ENCODE measurements at regions of chr6 and their contacts with region 1.

Region 1: DNA sequence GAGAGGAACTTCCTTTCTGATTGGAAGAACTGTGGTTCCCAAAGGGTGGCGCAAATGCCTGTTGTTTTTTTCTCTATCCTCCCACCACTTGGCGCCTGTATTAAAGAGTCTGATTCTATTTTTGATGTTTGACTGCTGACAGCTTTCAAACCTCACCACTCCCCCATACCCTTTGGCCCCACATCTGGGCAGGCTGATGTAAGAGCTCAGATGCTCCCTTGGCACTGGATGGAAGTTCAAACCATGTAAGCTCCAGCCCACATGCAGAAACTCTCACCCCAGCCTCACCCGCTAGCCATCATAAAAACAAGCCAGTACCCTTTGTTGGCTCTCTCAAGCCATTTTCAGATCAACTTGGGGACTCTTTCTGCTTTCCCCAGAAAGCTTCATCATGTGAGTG is 20.0 kb upstream of the TMEM14A start:
- DNase-seq: no peak
- H3K4me3 ChIP-seq: no peak overlapping the region
- H3K27ac ChIP-seq: peak overlapping the region in 7 of 8 donors; percentile 22 to 69 (median 61)
- H3K4me1 ChIP-seq: peaks cover 0 to 25% (median 2%) of the 10 kb centered on the region in 6 donors
- H3K27me3 ChIP-seq: peaks cover 0 to 23% (median 0%) of the 10 kb centered on the region in 7 donors
- CTCF ChIP-seq: no peak
- POLR2A ChIP-seq: no peak

Region 2: GRCh38 chr6:52284460-52285176 is 366.3 kb before region 1 on chr6 and contains the start of gene MCM3:
- intact Hi-C with region 1: no loop called
- DNase-seq: peak; percentile 97
- H3K4me3 ChIP-seq: peak within 1 kb of the TSS; percentile 61 to 95 (median 86)
- H3K27ac ChIP-seq: peak within 1 kb of the TSS; percentile 54 to 87 (median 80)
- H3K4me1 ChIP-seq: peaks cover 17 to 59% (median 34%) of the 10 kb centered on the region in 6 donors
- H3K27me3 ChIP-seq: no peaks in the 10 kb centered on the region
- CTCF ChIP-seq: peak in 9 of 11 experiments; percentile 5 to 69 (median 32)
- POLR2A ChIP-seq: no peak
- total RNA-seq, gene MCM3: 32.3 to 48.6 (median 36.8) TPM

Region 3: DNA sequence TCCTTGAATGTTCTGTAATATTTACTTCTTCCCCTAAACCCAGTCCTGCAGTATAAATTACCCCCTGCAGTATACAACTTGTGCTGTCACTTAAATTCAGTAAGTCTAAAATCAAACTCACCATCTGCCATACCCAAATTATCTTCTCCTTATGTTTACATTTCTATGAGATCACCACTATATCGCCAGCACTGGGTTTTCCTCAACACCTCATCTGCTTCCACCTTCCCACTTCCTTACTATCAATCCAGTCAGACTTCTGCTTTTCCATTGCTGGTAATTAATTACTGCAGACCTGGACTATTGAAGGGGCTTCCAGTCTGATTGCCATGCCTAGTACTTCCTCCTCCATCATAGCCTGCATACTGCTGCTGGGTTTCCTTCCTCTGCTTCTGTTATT is 215.6 kb before region 1 on chr6:
- intact Hi-C with region 1: no loop called
- DNase-seq: no peak
- H3K4me3 ChIP-seq: no peak overlapping the region
- H3K27ac ChIP-seq: no peak overlapping the region
- H3K4me1 ChIP-seq: no peaks in the 10 kb centered on the region
- H3K27me3 ChIP-seq: no peaks in the 10 kb centered on the region
- CTCF ChIP-seq: no peak
- POLR2A ChIP-seq: no peak

Region 4: DNA sequence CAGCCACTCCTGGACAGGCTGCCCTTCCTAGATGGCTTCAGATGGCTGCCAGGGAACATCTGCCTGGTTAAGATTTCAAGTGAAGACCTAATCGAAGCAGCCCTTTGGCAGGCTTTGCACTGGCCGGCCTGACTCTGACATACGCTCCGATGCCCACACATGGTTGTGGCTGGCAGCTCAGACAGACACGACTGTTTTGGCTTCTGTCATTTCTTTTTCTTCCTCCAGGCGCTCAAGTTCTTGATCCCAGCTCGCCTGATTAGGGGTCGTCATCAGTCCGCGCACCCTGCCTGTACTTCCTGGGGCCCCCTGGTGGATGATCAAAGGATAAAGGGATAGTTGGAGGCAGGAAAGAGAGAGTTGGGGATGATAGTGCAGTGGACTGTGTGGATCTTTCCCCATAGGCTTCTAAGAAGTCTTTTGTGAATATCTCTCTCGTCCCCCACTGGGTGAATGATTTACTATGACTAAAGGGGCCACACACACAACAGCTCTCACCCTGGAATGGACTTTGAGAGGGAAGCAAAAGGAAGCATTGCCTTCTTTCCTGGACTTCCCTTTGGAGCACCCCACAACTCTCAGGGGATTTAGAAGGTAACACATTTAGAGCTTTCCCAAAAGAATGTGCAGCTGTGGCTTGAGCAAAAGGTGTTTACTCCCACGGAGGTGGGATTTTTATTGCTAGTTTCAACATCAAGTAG is 52.7 kb before region 1 on chr6:
- intact Hi-C with region 1: loop called (anchors 10 kb)
- DNase-seq: no peak
- H3K4me3 ChIP-seq: no peak overlapping the region
- H3K27ac ChIP-seq: peak overlapping the region in 6 of 8 donors; percentile 2 to 73 (median 62)
- H3K4me1 ChIP-seq: peaks cover 3 to 51% (median 23%) of the 10 kb centered on the region in 6 donors
- H3K27me3 ChIP-seq: no peaks in the 10 kb centered on the region
- CTCF ChIP-seq: peak in 8 of 11 experiments; percentile 27 to 68 (median 55)
- POLR2A ChIP-seq: no peak

Region 5: DNA sequence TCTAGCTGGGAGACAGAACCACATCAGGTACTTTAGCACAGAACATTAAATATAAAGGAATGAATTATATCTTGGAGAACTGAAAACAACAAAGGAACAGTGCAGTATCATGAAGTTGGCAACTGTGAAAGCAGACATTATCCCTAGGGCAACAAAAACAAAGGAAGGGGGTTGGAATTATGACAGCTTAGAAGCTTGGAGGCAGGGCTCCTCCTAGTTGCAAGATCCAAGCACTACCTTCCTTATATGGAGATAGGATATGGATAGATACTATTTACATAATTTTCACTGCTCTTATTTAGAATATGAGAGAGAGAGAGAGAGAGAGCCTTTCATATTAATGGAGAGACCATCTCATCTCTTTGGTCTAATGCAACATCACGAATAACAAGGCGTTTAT is 47.0 kb after region 1 on chr6:
- intact Hi-C with region 1: no loop called
- DNase-seq: no peak
- H3K4me3 ChIP-seq: no peak overlapping the region
- H3K27ac ChIP-seq: no peak overlapping the region
- H3K4me1 ChIP-seq: no peaks in the 10 kb centered on the region
- H3K27me3 ChIP-seq: peaks cover 0 to 9% (median 0%) of the 10 kb centered on the region in 7 donors
- CTCF ChIP-seq: no peak
- POLR2A ChIP-seq: no peak